Endothelial cell of umbilical vein (primary cell): ENCODE measurements at regions of chr19 and their contacts with region 1.

Region 1: DNA sequence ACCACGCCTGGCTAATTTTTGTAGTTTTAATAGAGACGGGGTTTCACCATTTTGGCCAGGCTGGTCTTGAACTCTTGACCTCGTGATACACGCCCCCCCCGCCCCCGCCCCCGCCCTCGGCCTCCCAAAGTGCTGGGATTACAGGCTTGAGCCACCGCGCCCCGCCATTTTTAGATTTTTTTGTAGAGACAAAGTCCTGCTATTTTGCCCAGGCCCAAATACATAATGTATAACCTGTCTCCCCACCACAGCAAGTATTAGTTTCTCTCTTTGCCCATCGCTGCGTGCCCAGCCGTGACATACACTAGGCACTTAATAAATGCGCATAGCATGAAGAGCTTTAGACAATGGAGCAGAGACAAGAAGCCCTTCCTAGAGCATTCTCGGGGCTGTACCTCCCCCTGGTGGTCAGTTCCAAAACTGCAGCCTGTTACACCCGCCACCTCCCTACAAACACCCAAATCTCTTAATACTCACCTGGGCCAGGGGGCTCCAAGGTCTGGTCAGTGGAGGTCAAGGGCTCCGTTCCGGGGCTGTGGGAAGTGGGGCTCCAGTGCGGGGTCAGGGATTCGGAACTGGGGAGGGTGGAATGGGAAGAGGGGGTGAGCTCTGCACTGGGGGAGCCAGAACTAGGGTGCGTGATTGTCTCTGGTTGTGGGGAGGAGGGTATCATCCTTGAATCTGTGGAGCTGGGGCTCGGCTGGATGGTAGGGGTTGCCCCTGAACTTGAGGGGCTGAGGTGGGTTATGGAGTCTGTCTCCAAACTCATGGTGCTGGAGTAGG is 22.5 kb downstream of the IQCN start:
- DNase-seq: peak; percentile 70
- H3K4me3 ChIP-seq: no peak overlapping the region
- H3K27ac ChIP-seq: no peak overlapping the region
- H3K4me1 ChIP-seq: no peaks in the 10 kb centered on the region
- H3K27me3 ChIP-seq: peaks cover 0 to 8% of the 10 kb centered on the region in 2 experiments
- CTCF ChIP-seq: peak; percentile 82 to 92
- POLR2A ChIP-seq: no peak

Region 2: DNA sequence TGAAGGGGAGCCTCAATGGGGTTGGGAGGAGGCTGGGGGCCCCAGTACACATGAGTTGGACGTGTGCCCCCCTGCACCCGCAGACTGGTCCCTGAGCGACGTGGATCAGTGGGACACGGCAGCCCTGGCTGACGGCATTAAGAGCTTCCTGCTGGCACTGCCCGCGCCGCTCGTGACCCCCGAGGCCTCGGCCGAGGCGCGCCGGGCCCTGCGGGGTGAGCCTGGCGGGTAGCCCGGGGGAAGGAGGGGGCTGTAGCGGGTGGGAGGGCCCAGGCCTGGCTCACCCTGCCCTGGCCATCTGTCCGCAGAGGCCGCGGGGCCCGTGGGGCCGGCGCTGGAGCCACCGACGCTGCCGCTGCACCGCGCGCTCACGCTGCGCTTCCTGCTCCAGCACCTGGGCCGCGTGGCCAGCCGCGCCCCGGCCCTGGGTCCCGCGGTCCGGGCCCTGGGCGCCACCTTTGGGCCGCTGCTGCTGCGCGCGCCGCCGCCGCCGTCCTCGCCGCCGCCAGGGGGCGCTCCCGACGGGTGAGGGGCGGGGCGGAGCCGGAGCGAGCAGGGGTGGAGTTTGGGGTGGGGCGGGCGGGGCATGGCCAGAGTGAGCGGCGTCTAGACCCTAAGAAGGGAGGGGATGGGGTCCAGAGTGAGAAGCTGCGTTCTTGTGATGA is 90.7 kb before region 1 on chr19:
- CTCF ChIA-PET with region 1: interaction called, 18 read pairs
- POLR2A ChIA-PET with region 1: no interaction called
- dilution Hi-C with region 1: no loop called
- intact Hi-C with region 1: no loop called
- DNase-seq: peak; percentile 45
- H3K4me3 ChIP-seq: peak overlapping the region in 1 of 3 experiments; percentile 21
- H3K27ac ChIP-seq: no peak overlapping the region
- H3K4me1 ChIP-seq: peaks cover 14% of the 10 kb centered on the region
- H3K27me3 ChIP-seq: no peaks in the 10 kb centered on the region
- CTCF ChIP-seq: peak; percentile 35 to 36
- POLR2A ChIP-seq: peak; percentile 21

Region 3: DNA sequence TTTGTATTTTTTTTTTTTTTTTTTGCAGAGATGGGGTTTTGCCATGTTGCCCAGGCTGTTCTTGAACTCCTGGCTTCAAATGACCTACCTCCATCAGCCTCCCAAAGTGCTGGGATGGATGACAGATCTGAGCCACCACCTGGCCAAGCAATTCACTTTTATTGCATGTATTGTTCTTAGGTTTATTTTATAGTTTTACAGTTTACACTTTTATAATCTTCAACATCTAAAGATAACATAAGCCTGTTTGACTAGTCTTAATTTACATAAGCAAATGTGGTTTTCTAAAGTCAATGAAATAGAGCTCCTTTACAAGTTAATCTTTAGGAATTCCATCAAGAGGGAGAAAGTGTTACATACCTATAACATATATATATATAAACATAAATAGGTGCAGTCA is 68.2 kb before region 1 on chr19:
- CTCF ChIA-PET with region 1: interaction called, 10 read pairs
- POLR2A ChIA-PET with region 1: no interaction called
- dilution Hi-C with region 1: no loop called
- intact Hi-C with region 1: no loop called
- DNase-seq: no peak
- H3K4me3 ChIP-seq: no peak overlapping the region
- H3K27ac ChIP-seq: no peak overlapping the region
- H3K4me1 ChIP-seq: no peaks in the 10 kb centered on the region
- H3K27me3 ChIP-seq: no peaks in the 10 kb centered on the region
- CTCF ChIP-seq: no peak
- POLR2A ChIP-seq: no peak

Region 4: GRCh38 chr19:18203863-18204393 is 47.9 kb before region 1 on chr19 and contains the start of gene RAB3A:
- CTCF ChIA-PET with region 1: interaction called, 296 read pairs
- POLR2A ChIA-PET with region 1: no interaction called
- dilution Hi-C with region 1: no loop called
- intact Hi-C with region 1: loop called (anchors 1 kb)
- DNase-seq: peak; percentile 100
- H3K4me3 ChIP-seq: peak within 1 kb of the TSS; percentile 46 to 81 (median 75)
- H3K27ac ChIP-seq: peak within 1 kb of the TSS; percentile 88
- H3K4me1 ChIP-seq: peaks cover 10% of the 10 kb centered on the region
- H3K27me3 ChIP-seq: peaks cover 0 to 2% of the 10 kb centered on the region in 2 experiments
- CTCF ChIP-seq: no peak
- POLR2A ChIP-seq: no peak
- total RNA-seq, gene RAB3A: 0.88 and 1.9 TPM in 2 replicates

Region 5: DNA sequence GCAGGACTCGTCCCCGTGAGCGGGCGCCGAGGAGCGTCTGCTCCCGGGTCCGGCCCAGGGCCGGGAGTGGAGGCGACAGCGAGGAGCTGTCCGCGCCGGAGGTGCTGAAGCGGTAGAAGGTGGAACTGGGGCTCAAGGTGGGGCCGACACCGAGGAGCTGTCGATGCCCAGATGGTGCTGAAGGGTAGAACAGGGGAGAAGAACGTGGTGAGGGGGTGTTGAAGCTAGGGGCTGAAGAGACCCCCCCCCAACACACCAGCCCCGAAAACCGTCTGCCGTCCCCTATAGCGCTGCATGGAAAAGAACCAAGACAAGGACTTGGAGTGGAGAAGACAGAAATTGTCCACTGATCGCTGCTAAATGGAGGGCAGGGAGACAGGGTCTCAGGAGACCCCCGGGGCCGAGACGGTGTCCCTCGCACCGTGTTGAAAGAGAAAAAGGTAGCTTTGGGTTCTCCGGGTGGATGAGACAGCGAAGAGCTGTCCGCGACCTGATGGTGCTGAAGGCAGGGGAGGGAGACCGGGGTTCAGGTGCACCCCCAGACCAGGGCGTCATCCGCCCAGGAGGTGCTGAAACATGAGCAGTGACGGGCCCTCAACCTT is 18.5 kb before region 1 on chr19:
- CTCF ChIA-PET with region 1: interaction called, 15 read pairs
- POLR2A ChIA-PET with region 1: no interaction called
- dilution Hi-C with region 1: no loop called
- intact Hi-C with region 1: no loop called
- DNase-seq: peak; percentile 34
- H3K4me3 ChIP-seq: no peak overlapping the region
- H3K27ac ChIP-seq: no peak overlapping the region
- H3K4me1 ChIP-seq: no peaks in the 10 kb centered on the region
- H3K27me3 ChIP-seq: peaks cover 0 to 6% of the 10 kb centered on the region in 2 experiments
- CTCF ChIP-seq: no peak
- POLR2A ChIP-seq: no peak

Region 6: GRCh38 chr19:18328340-18329034 is 76.7 kb after region 1 on chr19:
- CTCF ChIA-PET with region 1: interaction called, 26 read pairs
- POLR2A ChIA-PET with region 1: no interaction called
- dilution Hi-C with region 1: no loop called
- intact Hi-C with region 1: no loop called
- DNase-seq: peak; percentile 97
- H3K4me3 ChIP-seq: peak overlapping the region in 2 of 3 experiments; percentile 4 to 16
- H3K27ac ChIP-seq: peak overlapping the region; percentile 13
- H3K4me1 ChIP-seq: peaks cover 8% of the 10 kb centered on the region
- H3K27me3 ChIP-seq: peaks cover 0 to 2% of the 10 kb centered on the region in 2 experiments
- CTCF ChIP-seq: peak; percentile 84 to 97
- POLR2A ChIP-seq: no peak